ENCODE measurements at regions of chr3 and their contacts with region 1.

Region 1: GRCh38 chr3:13414040-13414729 is 5.9 kb downstream of the NUP210 start:
- DNase-seq: peak; percentile 94
- ATAC-seq: peak; percentile 92
- H3K4me3 ChIP-seq: peak overlapping the region in 4 of 5 experiments; percentile 21 to 33 (median 29)
- H3K4me3 Mint-ChIP-seq: peak overlapping the region; percentile 73
- H3K27ac ChIP-seq: peak overlapping the region; percentile 90 to 91
- H3K27ac Mint-ChIP-seq: peak overlapping the region; percentile 98
- H3K4me1 ChIP-seq: peaks cover 60 to 72% of the 10 kb centered on the region in 2 donors
- H3K4me1 Mint-ChIP-seq: peaks cover 61% of the 10 kb centered on the region
- H3K27me3 ChIP-seq: no peaks in the 10 kb centered on the region
- H3K27me3 Mint-ChIP-seq: no peaks in the 10 kb centered on the region
- CTCF ChIP-seq: peak; percentile 26

Region 2: DNA sequence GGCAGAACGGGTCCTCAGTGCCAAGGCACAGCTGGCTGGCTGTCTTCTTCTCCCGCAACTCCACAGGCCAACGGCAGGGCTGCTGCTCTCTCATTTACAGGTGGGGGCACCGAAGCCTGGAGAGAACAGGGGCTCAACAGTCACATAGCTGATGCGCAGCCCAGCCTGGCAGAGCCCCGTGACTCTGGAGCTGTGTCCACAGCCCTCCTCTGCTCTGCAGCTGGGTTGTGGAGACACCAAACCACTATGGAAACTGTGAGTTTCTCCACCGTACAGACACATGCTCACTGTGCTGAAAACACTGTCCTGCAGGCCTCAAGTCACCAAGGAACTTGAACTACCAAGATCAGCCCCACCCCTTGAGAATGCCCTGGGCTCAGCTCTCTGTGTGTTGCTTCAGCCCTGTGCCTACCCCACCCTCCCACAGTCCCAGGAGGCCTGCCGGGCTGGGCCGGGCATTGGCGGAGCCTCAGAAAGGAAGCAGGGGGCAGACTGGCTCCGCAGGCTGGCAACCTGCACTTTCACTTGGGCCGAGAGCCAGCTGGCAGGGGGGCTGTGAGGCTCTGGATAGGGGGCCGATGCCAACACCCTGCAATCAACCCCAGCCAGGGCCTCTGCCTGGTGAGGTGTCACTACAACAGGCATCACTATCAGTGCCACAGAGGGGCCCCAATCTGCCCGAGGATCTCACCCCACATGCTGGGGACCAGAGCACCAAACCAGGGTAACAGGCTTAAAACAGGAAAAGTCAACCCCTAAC is 459.1 kb before region 1 on chr3:
- CTCF ChIA-PET with region 1: no interaction called
- POLR2A ChIA-PET with region 1: no interaction called
- intact Hi-C with region 1: loop called (anchors 2 kb)
- DNase-seq: peak; percentile 87
- ATAC-seq: peak; percentile 96
- H3K4me3 ChIP-seq: peak overlapping the region in 3 of 5 experiments; percentile 20 to 40 (median 32)
- H3K4me3 Mint-ChIP-seq: peak overlapping the region; percentile 74
- H3K27ac ChIP-seq: peak overlapping the region; percentile 70 to 81
- H3K27ac Mint-ChIP-seq: peak overlapping the region; percentile 94
- H3K4me1 ChIP-seq: peaks cover 60 to 90% of the 10 kb centered on the region in 2 donors
- H3K4me1 Mint-ChIP-seq: peaks cover 80% of the 10 kb centered on the region
- H3K27me3 ChIP-seq: no peaks in the 10 kb centered on the region
- H3K27me3 Mint-ChIP-seq: no peaks in the 10 kb centered on the region
- CTCF ChIP-seq: peak; percentile 35

Region 3: DNA sequence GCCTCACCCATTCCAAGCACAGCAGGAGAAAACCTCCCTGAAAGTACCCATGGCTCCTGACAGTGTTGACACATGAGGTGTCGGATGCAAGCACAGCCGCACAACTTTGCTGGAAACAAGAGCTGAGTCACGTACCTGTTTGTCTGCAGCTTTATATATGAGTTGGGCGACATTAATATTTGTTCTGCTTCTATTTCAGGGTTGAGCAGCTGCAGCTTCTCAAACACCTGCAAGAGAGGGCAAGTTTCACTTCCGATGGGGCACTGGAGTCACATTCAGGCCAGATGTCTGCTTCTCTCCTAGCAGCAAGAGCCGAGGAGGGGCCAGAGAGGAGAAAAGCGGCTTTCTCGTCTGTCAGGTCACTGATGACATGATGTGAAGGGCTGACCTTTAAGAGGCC is 82.0 kb before region 1 on chr3:
- CTCF ChIA-PET with region 1: no interaction called
- POLR2A ChIA-PET with region 1: interaction called, 9 read pairs
- intact Hi-C with region 1: loop called (anchors 1 kb)
- DNase-seq: peak; percentile 87
- ATAC-seq: peak; percentile 89
- H3K4me3 ChIP-seq: no peak overlapping the region
- H3K4me3 Mint-ChIP-seq: peak overlapping the region; percentile 62
- H3K27ac ChIP-seq: peak overlapping the region; percentile 46 to 64
- H3K27ac Mint-ChIP-seq: peak overlapping the region; percentile 87
- H3K4me1 ChIP-seq: peaks cover 27 to 41% of the 10 kb centered on the region in 2 donors
- H3K4me1 Mint-ChIP-seq: peaks cover 40% of the 10 kb centered on the region
- H3K27me3 ChIP-seq: no peaks in the 10 kb centered on the region
- H3K27me3 Mint-ChIP-seq: no peaks in the 10 kb centered on the region
- CTCF ChIP-seq: no peak

Region 4: GRCh38 chr3:13479581-13480339 is 65.6 kb after region 1 on chr3 and contains the start of gene HDAC11:
- CTCF ChIA-PET with region 1: no interaction called
- POLR2A ChIA-PET with region 1: interaction called, 10 read pairs
- intact Hi-C with region 1: loop called (anchors 1 kb)
- DNase-seq: peak; percentile 97
- ATAC-seq: peak; percentile 97
- H3K4me3 ChIP-seq: peak within 1 kb of the TSS; percentile 65 to 90 (median 80)
- H3K4me3 Mint-ChIP-seq: peak within 1 kb of the TSS; percentile 92
- H3K27ac ChIP-seq: peak within 1 kb of the TSS; percentile 61 to 86
- H3K27ac Mint-ChIP-seq: peak within 1 kb of the TSS; percentile 84
- H3K4me1 ChIP-seq: peaks cover 0 to 16% of the 10 kb centered on the region in 2 donors
- H3K4me1 Mint-ChIP-seq: peaks cover 7% of the 10 kb centered on the region
- H3K27me3 ChIP-seq: no peaks in the 10 kb centered on the region
- H3K27me3 Mint-ChIP-seq: peaks cover 3% of the 10 kb centered on the region
- CTCF ChIP-seq: no peak
- total RNA-seq, gene HDAC11: 5.5 and 6.1 TPM in 2 replicates

Measured in B cell (primary cell).